ENCODE measurements at regions of chr17 and their contacts with region 1.

Region 1: GRCh38 chr17:45394913-45395568 is 37.6 kb downstream of the ARHGAP27 start:
- DNase-seq: peak; percentile 90 to 94 (median 91)
- H3K4me3 ChIP-seq: peak overlapping the region in 1 of 7 experiments; percentile 4
- H3K27ac ChIP-seq: no peak overlapping the region
- H3K4me1 ChIP-seq: peaks cover 0 to 24% (median 15%) of the 10 kb centered on the region in 4 experiments
- H3K27me3 ChIP-seq: no peaks in the 10 kb centered on the region

Region 2: GRCh38 chr17:45410144-45411091 is 15.4 kb after region 1 on chr17:
- CTCF ChIA-PET with region 1: interaction called, 94 read pairs
- POLR2A ChIA-PET with region 1: no interaction called
- DNase-seq: peak in 2 of 3 donors; percentile 74 to 84
- H3K4me3 ChIP-seq: peak overlapping the region; percentile 43 to 94 (median 74)
- H3K27ac ChIP-seq: peak overlapping the region; percentile 72 to 78
- H3K4me1 ChIP-seq: peaks cover 17 to 90% (median 77%) of the 10 kb centered on the region in 4 experiments
- H3K27me3 ChIP-seq: no peaks in the 10 kb centered on the region

Region 3: GRCh38 chr17:45428050-45428617 is 33.1 kb after region 1 on chr17:
- CTCF ChIA-PET with region 1: interaction called, 123 read pairs
- POLR2A ChIA-PET with region 1: interaction called, 4 read pairs
- DNase-seq: peak; percentile 90 to 97 (median 97)
- H3K4me3 ChIP-seq: peak overlapping the region in 5 of 7 experiments; percentile 32 to 59 (median 53)
- H3K27ac ChIP-seq: peak overlapping the region; percentile 40 to 63
- H3K4me1 ChIP-seq: peaks cover 6 to 89% (median 71%) of the 10 kb centered on the region in 4 experiments
- H3K27me3 ChIP-seq: no peaks in the 10 kb centered on the region

Measured in common myeloid progenitor, CD34-positive (primary cell).